Activated naive CD4-positive, alpha-beta T cell treated with anti-CD3 and anti-CD28 coated beads, Interleukin-2, amount 10 ng/mL, durations not matched to agents 7 days and 5 days (primary cell): ENCODE measurements at regions of chr18 and their contacts with region 1.

Region 1: GRCh38 chr18:80171054-80171872 is 62.2 kb downstream of the ADNP2 start:
- DNase-seq: peak; percentile 63
- H3K4me3 Mint-ChIP-seq: no peak overlapping the region
- H3K27ac Mint-ChIP-seq: no peak overlapping the region
- H3K4me1 Mint-ChIP-seq: peaks cover 13% of the 10 kb centered on the region
- H3K27me3 Mint-ChIP-seq: peaks cover 72% of the 10 kb centered on the region

Region 2: GRCh38 chr18:80253871-80254492 is 82.7 kb after region 1 on chr18:
- CTCF ChIA-PET with region 1: interaction called, 13 read pairs
- DNase-seq: peak; percentile 31
- H3K4me3 Mint-ChIP-seq: no peak overlapping the region
- H3K27ac Mint-ChIP-seq: no peak overlapping the region
- H3K4me1 Mint-ChIP-seq: no peaks in the 10 kb centered on the region
- H3K27me3 Mint-ChIP-seq: peaks cover 33% of the 10 kb centered on the region